ENCODE measurements at regions of chrX and their contacts with region 1.

Region 1: GRCh38 chrX:47384502-47384901 is 14.1 kb downstream of the ZNF157 start:
- DNase-seq: peak; percentile 27 to 83 (median 67)
- ATAC-seq: peak; percentile 86
- H3K4me3 ChIP-seq: no peak overlapping the region
- H3K4me3 Mint-ChIP-seq: peak overlapping the region in 3 of 10 donors; percentile 31 to 39 (median 37)
- H3K27ac ChIP-seq: no peak overlapping the region
- H3K27ac Mint-ChIP-seq: peak overlapping the region in 3 of 9 donors; percentile 45 to 73 (median 67)
- H3K4me1 ChIP-seq: peaks cover 4 to 10% of the 10 kb centered on the region in 2 donors
- H3K4me1 Mint-ChIP-seq: peaks cover 11 to 39% (median 31%) of the 10 kb centered on the region in 7 donors
- H3K27me3 ChIP-seq: no peaks in the 10 kb centered on the region
- H3K27me3 Mint-ChIP-seq: no peaks in the 10 kb centered on the region

Region 2: DNA sequence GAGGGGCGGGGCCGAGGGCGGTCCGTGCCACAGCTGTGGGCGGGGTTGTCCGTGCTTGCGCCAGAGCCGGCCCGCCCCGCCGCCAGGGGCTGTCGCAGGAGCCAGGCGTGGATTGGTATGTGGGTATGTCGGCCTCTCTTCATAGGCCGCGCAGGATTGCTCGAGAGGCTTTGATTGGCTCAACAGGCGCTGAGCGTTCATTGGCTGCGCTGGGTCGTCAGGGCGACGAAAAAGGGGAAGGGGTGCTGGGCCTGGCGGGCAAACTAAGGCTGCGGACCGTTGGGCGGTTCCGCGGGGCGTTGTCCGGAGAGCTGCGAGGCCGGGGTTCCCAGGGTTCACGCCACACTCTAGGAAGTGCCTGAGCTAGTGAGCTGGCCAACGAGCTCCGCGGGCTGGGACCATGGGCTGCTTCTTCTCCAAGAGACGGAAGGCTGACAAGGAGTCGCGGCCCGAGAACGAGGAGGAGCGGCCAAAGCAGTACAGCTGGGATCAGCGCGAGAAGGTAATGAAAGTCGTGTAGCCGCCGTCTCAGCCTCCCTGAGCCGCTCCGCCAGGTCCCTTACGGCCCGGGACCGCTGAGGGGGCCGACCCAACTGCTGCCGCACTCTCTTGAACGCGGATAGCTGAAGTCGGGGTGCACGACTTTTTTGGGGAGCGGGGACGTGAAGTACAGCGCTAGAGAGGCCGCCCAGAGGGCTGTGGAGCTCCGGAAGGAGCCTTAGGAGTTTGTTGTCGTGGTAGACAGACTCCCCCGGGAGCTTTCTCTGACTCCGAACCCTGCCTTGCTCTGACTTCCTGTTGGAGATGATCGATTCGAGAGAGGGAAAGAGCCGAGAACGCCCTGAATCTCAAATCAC is 547.6 kb before region 1 on chrX and contains the start of gene RP2:
- CTCF ChIA-PET with region 1: no interaction called
- POLR2A ChIA-PET with region 1: no interaction called
- intact Hi-C with region 1: loop called in 1 of 2 experiments (anchors 2 kb)
- DNase-seq: peak; percentile 65 to 84 (median 81)
- ATAC-seq: peak; percentile 98
- H3K4me3 ChIP-seq: peak within 1 kb of the TSS; percentile 91
- H3K4me3 Mint-ChIP-seq: peak within 1 kb of the TSS; percentile 93 to 99 (median 97)
- H3K27ac ChIP-seq: peak within 1 kb of the TSS; percentile 83
- H3K27ac Mint-ChIP-seq: peak within 1 kb of the TSS; percentile 80 to 98 (median 93)
- H3K4me1 ChIP-seq: no peaks in the 10 kb centered on the region
- H3K4me1 Mint-ChIP-seq: peaks cover 0 to 29% (median 12%) of the 10 kb centered on the region in 7 donors
- H3K27me3 ChIP-seq: no peaks in the 10 kb centered on the region
- H3K27me3 Mint-ChIP-seq: peaks cover 0 to 3% (median 0%) of the 10 kb centered on the region in 5 donors
- total RNA-seq, gene RP2: 4.9 to 14.5 (median 6.3) TPM

Region 3: GRCh38 chrX:47133493-47133892 is 251.0 kb before region 1 on chrX:
- CTCF ChIA-PET with region 1: no interaction called
- POLR2A ChIA-PET with region 1: no interaction called
- intact Hi-C with region 1: no loop called
- DNase-seq: no peak
- ATAC-seq: no peak
- H3K4me3 ChIP-seq: no peak overlapping the region
- H3K4me3 Mint-ChIP-seq: no peak overlapping the region
- H3K27ac ChIP-seq: no peak overlapping the region
- H3K27ac Mint-ChIP-seq: no peak overlapping the region
- H3K4me1 ChIP-seq: no peaks in the 10 kb centered on the region
- H3K4me1 Mint-ChIP-seq: peaks cover 0 to 7% (median 4%) of the 10 kb centered on the region in 7 donors
- H3K27me3 ChIP-seq: no peaks in the 10 kb centered on the region
- H3K27me3 Mint-ChIP-seq: no peaks in the 10 kb centered on the region

Region 4: DNA sequence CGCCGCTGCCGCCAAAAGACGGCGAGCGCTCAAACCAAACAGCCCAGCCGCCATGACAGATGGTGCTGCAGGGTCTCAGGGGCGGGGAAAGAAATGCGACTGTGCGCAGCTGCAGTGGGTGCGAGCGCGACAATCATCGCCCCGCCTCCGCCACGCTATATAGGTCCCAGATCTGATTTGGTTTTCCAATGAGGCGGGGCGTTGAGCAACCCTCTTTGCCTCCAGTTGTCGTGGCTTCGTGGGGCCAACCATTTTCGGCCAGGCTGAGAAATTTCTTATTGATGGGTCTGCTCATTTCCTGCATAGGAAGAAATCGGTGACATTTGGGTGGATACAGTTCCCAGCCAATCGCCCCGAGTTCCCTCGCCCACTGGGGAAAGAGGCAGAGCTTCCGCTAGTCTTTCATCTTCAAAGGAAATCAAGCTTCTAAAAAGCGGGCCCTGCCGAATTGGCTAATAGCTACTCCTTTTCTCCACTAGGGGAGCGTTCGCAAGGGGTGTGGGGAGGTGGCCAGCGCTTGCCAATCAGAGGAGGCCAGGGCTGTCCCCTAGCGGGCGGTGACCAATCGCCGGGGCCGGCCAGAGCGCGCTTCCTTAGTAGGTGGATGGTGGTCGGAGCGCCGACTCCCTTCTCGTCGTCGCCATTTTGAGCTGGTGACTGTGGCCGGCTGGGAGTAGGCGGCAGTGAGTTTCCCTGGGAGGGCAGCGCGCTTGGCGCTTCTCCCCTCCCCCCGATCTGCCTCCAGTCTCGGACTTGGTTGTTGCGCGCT is 239.7 kb before region 1 on chrX and contains the starts of genes NDUFB11 and RBM10:
- CTCF ChIA-PET with region 1: no interaction called
- POLR2A ChIA-PET with region 1: interaction called, 3 read pairs
- intact Hi-C with region 1: loop called in 1 of 2 experiments (anchors 2 kb)
- DNase-seq: peak; percentile 64 to 90 (median 87)
- ATAC-seq: peak; percentile 95
- H3K4me3 ChIP-seq: peak within 1 kb of the TSS; percentile 77
- H3K4me3 Mint-ChIP-seq: peak within 1 kb of the TSS; percentile 92 to 99 (median 96)
- H3K27ac ChIP-seq: peak within 1 kb of the TSS; percentile 94
- H3K27ac Mint-ChIP-seq: peak within 1 kb of the TSS; percentile 93 to 99 (median 96)
- H3K4me1 ChIP-seq: peaks cover 6 to 12% of the 10 kb centered on the region in 2 donors
- H3K4me1 Mint-ChIP-seq: peaks cover 6 to 42% (median 26%) of the 10 kb centered on the region in 7 donors
- H3K27me3 ChIP-seq: no peaks in the 10 kb centered on the region
- H3K27me3 Mint-ChIP-seq: no peaks in the 10 kb centered on the region
- total RNA-seq, gene NDUFB11: 51.3 to 92.5 (median 55.2) TPM
- total RNA-seq, gene RBM10: 31.8 to 55.6 (median 47.6) TPM

Region 5: GRCh38 chrX:47311932-47312774 is 72.3 kb before region 1 on chrX:
- CTCF ChIA-PET with region 1: interaction called, 3 read pairs
- POLR2A ChIA-PET with region 1: no interaction called
- intact Hi-C with region 1: loop called in 1 of 2 experiments (anchors 1 kb)
- DNase-seq: peak; percentile 6 to 57 (median 39)
- ATAC-seq: peak; percentile 69
- H3K4me3 ChIP-seq: no peak overlapping the region
- H3K4me3 Mint-ChIP-seq: no peak overlapping the region
- H3K27ac ChIP-seq: no peak overlapping the region
- H3K27ac Mint-ChIP-seq: no peak overlapping the region
- H3K4me1 ChIP-seq: no peaks in the 10 kb centered on the region
- H3K4me1 Mint-ChIP-seq: no peaks in the 10 kb centered on the region
- H3K27me3 ChIP-seq: no peaks in the 10 kb centered on the region
- H3K27me3 Mint-ChIP-seq: no peaks in the 10 kb centered on the region

Region 6: DNA sequence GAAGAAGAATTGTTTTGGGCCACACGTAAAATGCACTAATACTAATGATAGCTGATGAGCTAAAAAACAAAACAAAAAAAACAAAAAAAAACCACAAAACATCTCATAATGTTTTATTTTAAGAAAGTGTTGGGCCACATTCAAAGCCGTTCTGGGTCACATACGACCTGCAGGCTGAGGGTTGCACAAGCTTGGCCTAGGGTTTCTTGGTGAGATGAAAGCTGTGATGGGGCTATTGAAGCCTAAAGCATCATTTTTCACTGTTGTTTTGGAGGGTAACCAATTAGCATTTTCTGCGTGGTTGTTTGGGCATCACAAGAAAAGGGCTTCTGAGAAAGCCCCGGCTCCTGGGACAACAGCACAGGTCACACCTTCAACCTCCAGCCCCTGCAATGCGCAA is 56.6 kb before region 1 on chrX:
- CTCF ChIA-PET with region 1: no interaction called
- POLR2A ChIA-PET with region 1: no interaction called
- intact Hi-C with region 1: no loop called
- DNase-seq: no peak
- ATAC-seq: no peak
- H3K4me3 ChIP-seq: no peak overlapping the region
- H3K4me3 Mint-ChIP-seq: no peak overlapping the region
- H3K27ac ChIP-seq: no peak overlapping the region
- H3K27ac Mint-ChIP-seq: no peak overlapping the region
- H3K4me1 ChIP-seq: no peaks in the 10 kb centered on the region
- H3K4me1 Mint-ChIP-seq: peaks cover 0 to 1% (median 0%) of the 10 kb centered on the region in 7 donors
- H3K27me3 ChIP-seq: no peaks in the 10 kb centered on the region
- H3K27me3 Mint-ChIP-seq: no peaks in the 10 kb centered on the region

Region 7: DNA sequence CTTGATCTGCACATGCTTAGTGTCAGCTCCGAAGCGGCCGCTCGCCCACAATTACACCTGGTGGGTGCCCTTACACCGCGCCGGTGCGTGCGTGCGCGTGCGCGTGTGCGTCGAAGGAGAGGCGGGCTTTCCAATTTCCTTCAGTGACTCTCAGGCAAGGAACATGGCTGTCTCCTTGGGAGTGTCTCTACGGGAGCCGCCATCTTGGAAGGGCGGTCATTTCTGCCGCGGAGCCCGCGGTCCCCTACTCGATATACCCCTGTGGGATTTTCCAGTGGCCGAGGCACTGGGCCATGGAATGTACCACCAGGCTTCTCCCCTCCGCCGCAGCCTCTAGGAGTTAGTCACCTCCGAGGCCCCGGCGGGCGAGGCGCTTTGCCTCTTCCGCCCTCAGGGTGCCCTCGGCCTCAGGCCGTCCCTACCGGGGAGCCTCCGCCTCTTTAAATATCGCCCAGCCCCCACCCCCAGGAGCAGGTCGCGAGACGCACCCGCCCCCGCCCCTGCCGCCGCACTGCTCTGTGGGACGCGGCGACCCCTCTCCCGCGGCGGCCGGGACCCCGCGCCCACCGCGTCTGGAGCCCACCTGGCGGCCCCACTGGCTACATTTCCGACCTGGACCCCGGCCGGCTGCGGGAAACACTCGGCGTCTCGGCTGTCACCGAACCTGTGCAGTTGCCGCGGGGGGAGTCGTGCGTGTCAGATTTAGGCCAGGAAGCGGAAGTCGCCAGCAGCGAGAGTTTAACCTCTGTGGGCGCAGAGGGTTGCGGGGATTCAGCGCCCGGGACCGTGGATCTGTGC is 98.2 kb after region 1 on chrX and contains the start of gene ZNF41:
- CTCF ChIA-PET with region 1: no interaction called
- POLR2A ChIA-PET with region 1: interaction called, 4 read pairs
- intact Hi-C with region 1: loop called (anchors 2 to 5 kb)
- DNase-seq: peak; percentile 48 to 84 (median 76)
- ATAC-seq: peak; percentile 95
- H3K4me3 ChIP-seq: peak within 1 kb of the TSS; percentile 85
- H3K4me3 Mint-ChIP-seq: peak within 1 kb of the TSS; percentile 81 to 97 (median 90)
- H3K27ac ChIP-seq: peak within 1 kb of the TSS; percentile 88
- H3K27ac Mint-ChIP-seq: peak within 1 kb of the TSS; percentile 82 to 98 (median 96)
- H3K4me1 ChIP-seq: peaks cover 9 to 22% of the 10 kb centered on the region in 2 donors
- H3K4me1 Mint-ChIP-seq: peaks cover 22 to 50% (median 37%) of the 10 kb centered on the region in 7 donors
- H3K27me3 ChIP-seq: no peaks in the 10 kb centered on the region
- H3K27me3 Mint-ChIP-seq: no peaks in the 10 kb centered on the region
- total RNA-seq, gene ZNF41: 7.5 to 17.8 (median 14.7) TPM

Measured in naive thymus-derived CD4-positive, alpha-beta T cell (primary cell).